GM10248 (cell line): ENCODE measurements at regions of chr1 and their contacts with region 1.

Region 1: GRCh38 chr1:234212764-234213657 is 160.2 kb upstream of the COA6 start:
- DNase-seq: peak; percentile 65
- CTCF ChIP-seq: peak; percentile 46

Region 2: GRCh38 chr1:234226106-234226818 is 13.3 kb after region 1 on chr1:
- CTCF ChIA-PET with region 1: interaction called, 18 read pairs
- POLR2A ChIA-PET with region 1: no interaction called
- DNase-seq: no peak
- CTCF ChIP-seq: no peak

Region 3: GRCh38 chr1:234246638-234247116 is 33.7 kb after region 1 on chr1:
- CTCF ChIA-PET with region 1: no interaction called
- POLR2A ChIA-PET with region 1: no interaction called
- DNase-seq: peak; percentile 43
- CTCF ChIP-seq: no peak

Region 4: DNA sequence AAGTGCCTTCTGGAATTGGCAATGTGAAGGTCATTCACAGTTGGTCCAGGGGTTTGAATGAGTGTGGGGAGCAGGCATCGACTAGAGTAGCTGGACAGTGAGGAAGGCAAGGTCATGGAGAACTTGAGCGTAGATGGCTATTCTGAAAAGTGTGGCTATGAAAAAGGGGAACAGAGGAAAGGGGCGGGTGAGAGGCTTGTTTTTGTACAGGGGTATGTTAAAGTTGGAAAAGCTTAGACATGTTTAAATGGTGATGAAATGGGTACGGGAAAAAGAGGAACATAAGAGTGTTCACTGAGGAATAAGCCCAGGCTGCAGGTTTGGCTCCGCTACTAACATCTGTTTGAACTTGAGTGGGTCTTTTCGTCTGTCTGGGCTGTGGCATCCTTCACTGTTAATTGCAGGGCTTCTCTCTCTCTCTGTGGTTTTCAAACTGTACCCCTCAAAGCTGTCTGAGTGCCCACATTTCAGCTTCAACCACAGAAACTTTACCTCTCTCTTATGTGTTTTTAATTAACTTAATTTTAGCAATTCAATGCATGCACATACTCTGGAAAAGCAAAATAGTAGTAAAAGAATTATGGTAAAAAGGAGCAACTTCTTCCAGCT is 89.4 kb after region 1 on chr1:
- CTCF ChIA-PET with region 1: interaction called, 10 read pairs
- POLR2A ChIA-PET with region 1: no interaction called
- DNase-seq: no peak
- CTCF ChIP-seq: no peak